ENCODE measurements at regions of chr6 and their contacts with region 1.

Region 1: DNA sequence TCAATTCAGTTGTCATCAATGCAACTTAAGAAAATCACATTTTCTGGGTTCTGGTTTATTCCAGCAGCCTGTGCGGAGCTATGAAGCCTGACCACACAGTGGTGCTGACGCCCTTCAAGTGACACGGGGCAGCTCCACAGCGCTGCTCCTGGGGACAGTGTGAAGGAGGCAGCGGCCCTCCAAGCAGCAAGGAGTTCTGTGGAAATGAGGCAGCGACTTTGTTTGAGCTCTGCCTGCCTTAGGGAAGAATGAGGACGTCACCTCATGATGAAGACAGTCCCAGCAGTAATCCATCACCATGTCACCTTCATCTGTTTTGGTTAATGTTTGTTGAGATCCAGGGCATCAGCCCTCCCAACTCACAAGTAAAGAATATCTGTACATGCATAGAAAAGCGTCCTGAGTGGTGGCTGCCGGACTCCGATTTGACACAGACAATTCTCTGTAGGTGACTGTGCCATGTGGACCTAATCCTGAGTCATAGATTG is 168.5 kb upstream of the UST start:
- ATAC-seq: peak; percentile 100
- H3K4me3 ChIP-seq: no peak overlapping the region
- H3K27ac ChIP-seq: no peak overlapping the region
- H3K4me1 ChIP-seq: peaks cover 3% of the 10 kb centered on the region in 2 donors

Region 2: GRCh38 chr6:148746363-148747144 is 168.3 kb after region 1 on chr6 and contains the start of gene UST:
- in situ Hi-C with region 1: loop called in 1 of 9 experiments (anchors 25 kb)
- ATAC-seq: peak; percentile 58 to 86 (median 64)
- H3K4me3 ChIP-seq: peak within 1 kb of the TSS; percentile 61 to 82 (median 77)
- H3K27ac ChIP-seq: peak within 1 kb of the TSS in 1 of 2 donors; percentile 63
- H3K4me1 ChIP-seq: peaks cover 5 to 6% of the 10 kb centered on the region in 2 donors
- total RNA-seq, gene UST: 5.2 to 22.9 (median 7.8) TPM

Measured in motor neuron (in vitro differentiated cells).